ENCODE measurements at regions of chr22 and their contacts with region 1.

Region 1: DNA sequence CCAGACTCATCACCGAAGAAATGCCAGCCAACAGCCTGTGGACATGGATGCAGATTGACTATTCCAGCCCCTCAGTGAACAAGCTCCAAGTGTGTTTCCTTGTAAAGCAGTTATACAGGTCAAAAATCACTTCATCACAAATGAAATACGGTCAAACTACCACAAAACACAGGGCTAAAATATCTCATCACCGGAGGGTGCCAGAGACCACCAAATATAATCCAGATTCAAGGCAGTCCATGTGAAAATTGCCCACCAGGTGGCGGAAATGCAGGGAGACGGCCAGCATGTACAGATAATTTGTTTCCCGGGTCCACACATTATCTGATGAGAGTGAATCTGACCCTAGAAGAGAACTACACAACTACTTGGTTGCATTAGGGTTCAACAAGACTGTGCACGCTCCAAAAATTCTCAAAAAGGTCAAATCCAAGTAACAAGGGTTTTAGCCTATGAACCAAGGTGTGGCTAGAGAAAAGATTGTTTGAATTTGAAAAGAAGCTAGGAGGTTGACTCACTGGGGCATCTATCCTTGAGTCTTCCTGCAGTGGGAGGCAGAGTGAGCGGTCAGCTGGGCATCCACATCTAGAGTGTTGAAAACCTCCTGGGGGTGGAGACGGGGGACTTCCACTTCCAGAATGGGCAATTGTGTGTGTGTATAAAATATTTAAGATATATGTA is 71.7 kb downstream of the IGLL5 start:
- DNase-seq: peak; percentile 73
- H3K4me3 ChIP-seq: no peak overlapping the region; a peak in 1 of 4 replicates
- H3K27ac ChIP-seq: no peak overlapping the region
- H3K4me1 ChIP-seq: peaks cover 0 to 2% of the 10 kb centered on the region in 2 experiments; a peak in 1 of 4 replicates
- H3K27me3 ChIP-seq: no peaks in the 10 kb centered on the region
- CTCF ChIP-seq: peak; percentile 98
- EP300 ChIP-seq: no peak
- RAD21 ChIP-seq: peak; percentile 100

Region 2: DNA sequence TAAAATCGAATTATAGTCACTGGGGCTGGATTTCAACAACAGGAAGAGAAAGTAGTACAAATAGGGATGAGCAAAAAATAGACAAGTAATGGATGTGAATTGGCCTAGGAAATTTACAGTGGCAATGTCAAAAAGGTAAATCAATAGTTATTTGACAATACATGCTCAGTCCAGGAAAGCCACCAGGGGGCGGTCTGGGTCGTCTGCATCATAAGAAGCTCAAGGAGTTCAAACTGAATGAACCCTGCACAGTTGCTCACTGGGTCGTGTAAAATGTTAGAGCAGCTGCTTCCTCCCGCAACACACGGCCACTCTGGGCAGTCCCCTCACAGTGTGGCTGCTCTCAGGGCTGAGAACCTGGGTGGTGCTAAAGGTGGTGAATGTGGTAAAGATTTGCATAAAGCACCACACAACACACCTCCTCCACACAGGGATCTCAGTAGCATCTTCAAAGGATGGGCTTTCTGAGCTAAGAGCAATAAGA is 536.6 kb before region 1 on chr22:
- CTCF ChIA-PET with region 1: interaction called, 11 read pairs
- POLR2A ChIA-PET with region 1: no interaction called
- DNase-seq: peak; percentile 49
- H3K4me3 ChIP-seq: peak overlapping the region in 1 of 2 experiments; percentile 6; a peak in 1 of 4 replicates
- H3K27ac ChIP-seq: no peak overlapping the region
- H3K4me1 ChIP-seq: no peaks in the 10 kb centered on the region
- H3K27me3 ChIP-seq: peaks cover 7% of the 10 kb centered on the region; the same call in 1 of the 2 replicates
- CTCF ChIP-seq: peak; percentile 88
- EP300 ChIP-seq: no peak
- RAD21 ChIP-seq: peak; percentile 26; the same call in 1 of the 2 replicates

Region 3: GRCh38 chr22:22810018-22810427 is 149.3 kb before region 1 on chr22:
- CTCF ChIA-PET with region 1: interaction called, 11 read pairs
- POLR2A ChIA-PET with region 1: no interaction called
- DNase-seq: peak; percentile 51
- H3K4me3 ChIP-seq: no peak overlapping the region
- H3K27ac ChIP-seq: no peak overlapping the region
- H3K4me1 ChIP-seq: no peaks in the 10 kb centered on the region
- H3K27me3 ChIP-seq: no peaks in the 10 kb centered on the region
- CTCF ChIP-seq: peak; percentile 58
- EP300 ChIP-seq: no peak
- RAD21 ChIP-seq: peak; percentile 34

Region 4: DNA sequence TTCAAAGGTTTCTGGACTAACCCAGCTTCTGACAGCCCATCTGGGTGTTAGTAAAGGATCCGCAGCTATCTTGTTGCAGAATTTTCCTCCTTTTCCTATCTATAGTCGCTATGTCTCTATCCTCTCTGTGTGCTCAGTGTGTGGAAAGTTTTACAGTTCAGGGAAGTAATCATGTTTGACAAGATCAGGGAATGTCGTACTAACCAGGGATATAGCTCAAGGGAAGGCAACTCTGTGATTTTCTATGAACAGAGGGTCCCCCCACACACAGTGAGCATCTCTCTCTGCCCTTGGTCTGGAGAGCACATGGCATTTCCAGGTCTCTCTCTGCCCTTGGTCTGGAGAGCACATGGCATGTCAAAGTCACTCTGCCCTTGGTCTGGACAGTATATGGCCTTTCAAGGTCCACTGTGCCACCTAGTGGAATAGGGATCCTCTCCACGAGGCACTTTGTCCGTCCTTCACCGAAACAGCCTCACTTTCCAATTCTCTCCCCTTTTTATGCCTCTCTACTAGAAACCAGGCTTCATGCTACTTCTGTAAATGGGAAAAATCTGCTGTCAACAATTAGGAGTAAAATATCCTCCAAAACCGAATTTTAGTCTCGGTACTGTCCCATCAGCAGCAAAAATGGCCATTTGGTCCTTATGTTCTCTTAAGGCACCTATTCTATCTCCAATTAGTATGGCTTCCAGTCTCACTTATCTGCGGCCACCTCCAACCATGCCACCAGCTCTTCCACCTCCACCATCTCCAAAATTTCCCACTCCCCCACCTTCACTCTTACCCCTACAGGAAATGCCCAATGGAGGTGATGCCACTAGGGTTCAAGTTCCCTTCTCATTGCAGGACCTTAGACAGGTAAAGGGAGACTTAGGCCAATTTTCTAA is 17.0 kb after region 1 on chr22:
- CTCF ChIA-PET with region 1: interaction called, 214 read pairs
- POLR2A ChIA-PET with region 1: no interaction called
- DNase-seq: peak; percentile 36
- H3K4me3 ChIP-seq: no peak overlapping the region
- H3K27ac ChIP-seq: peak overlapping the region in 1 of 2 experiments; percentile 39; a peak in 2 of 4 replicates
- H3K4me1 ChIP-seq: peaks cover 0 to 16% of the 10 kb centered on the region in 2 experiments; a peak in 1 of 4 replicates
- H3K27me3 ChIP-seq: no peaks in the 10 kb centered on the region
- CTCF ChIP-seq: no peak
- EP300 ChIP-seq: peak in 1 of 2 experiments; percentile 86; a peak in 2 of 4 replicates
- RAD21 ChIP-seq: peak; percentile 63

Region 5: DNA sequence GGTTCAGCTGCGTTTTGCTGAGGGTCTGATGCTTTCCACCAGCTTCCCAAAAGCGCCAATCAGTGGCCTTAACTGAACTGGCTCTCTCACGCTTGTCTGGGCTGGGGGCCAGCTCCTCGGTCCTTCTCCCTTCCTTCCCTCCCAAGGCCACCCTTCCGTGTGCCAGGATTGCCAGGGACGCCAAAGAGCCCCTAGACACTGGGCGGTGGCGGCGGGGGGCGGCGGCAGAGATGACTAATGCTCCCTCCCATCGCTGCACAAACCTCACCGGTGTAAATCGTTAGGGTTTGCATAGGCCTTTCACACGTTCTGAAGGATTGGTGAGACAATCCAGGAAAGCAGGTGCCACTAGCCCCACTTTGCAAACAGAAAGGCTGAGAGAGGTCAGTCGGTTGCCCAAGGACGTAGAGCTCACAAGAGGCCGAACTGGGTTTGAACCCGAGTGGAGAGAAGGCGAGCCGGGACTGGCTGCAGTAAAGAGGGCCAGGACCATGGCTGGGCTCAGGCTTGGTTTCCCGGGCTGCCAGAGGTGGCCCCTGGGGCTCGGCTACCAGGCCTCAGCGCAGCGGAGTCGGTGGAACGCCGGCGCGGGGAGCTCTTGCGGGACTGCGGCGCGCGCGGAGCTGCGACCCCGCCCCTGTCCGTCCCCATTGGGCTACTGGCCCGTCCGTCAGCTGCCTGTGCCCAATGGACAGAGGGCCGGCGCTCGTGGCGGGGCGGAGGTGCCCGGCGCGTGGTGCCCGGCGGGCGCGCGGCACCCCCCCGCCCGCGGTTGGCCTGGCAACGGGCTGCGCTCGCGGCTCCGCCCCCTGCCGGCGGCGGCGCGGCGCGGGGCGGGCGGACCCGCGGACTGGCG is 110.4 kb after region 1 on chr22:
- CTCF ChIA-PET with region 1: interaction called, 16 read pairs
- POLR2A ChIA-PET with region 1: no interaction called
- DNase-seq: peak; percentile 99
- H3K4me3 ChIP-seq: peak overlapping the region; percentile 67 to 70
- H3K27ac ChIP-seq: peak overlapping the region in 1 of 2 experiments; percentile 73; a peak in 2 of 4 replicates
- H3K4me1 ChIP-seq: peaks cover 5 to 34% of the 10 kb centered on the region in 2 experiments; a peak in 1 of 4 replicates
- H3K27me3 ChIP-seq: no peaks in the 10 kb centered on the region
- CTCF ChIP-seq: no peak
- EP300 ChIP-seq: no peak
- RAD21 ChIP-seq: no peak

Region 6: GRCh38 chr22:23128269-23129108 is 169.2 kb after region 1 on chr22:
- CTCF ChIA-PET with region 1: interaction called, 397 read pairs
- POLR2A ChIA-PET with region 1: interaction called, 5 read pairs
- DNase-seq: peak; percentile 90
- H3K4me3 ChIP-seq: no peak overlapping the region; a peak in 1 of 4 replicates
- H3K27ac ChIP-seq: no peak overlapping the region; a peak in 1 of 4 replicates
- H3K4me1 ChIP-seq: peaks cover 0 to 22% of the 10 kb centered on the region in 2 experiments; a peak in 1 of 4 replicates
- H3K27me3 ChIP-seq: no peaks in the 10 kb centered on the region
- CTCF ChIP-seq: peak; percentile 86
- EP300 ChIP-seq: peak in 1 of 2 experiments; percentile 61; a peak in 1 of 4 replicates
- RAD21 ChIP-seq: peak; percentile 97

Region 7: DNA sequence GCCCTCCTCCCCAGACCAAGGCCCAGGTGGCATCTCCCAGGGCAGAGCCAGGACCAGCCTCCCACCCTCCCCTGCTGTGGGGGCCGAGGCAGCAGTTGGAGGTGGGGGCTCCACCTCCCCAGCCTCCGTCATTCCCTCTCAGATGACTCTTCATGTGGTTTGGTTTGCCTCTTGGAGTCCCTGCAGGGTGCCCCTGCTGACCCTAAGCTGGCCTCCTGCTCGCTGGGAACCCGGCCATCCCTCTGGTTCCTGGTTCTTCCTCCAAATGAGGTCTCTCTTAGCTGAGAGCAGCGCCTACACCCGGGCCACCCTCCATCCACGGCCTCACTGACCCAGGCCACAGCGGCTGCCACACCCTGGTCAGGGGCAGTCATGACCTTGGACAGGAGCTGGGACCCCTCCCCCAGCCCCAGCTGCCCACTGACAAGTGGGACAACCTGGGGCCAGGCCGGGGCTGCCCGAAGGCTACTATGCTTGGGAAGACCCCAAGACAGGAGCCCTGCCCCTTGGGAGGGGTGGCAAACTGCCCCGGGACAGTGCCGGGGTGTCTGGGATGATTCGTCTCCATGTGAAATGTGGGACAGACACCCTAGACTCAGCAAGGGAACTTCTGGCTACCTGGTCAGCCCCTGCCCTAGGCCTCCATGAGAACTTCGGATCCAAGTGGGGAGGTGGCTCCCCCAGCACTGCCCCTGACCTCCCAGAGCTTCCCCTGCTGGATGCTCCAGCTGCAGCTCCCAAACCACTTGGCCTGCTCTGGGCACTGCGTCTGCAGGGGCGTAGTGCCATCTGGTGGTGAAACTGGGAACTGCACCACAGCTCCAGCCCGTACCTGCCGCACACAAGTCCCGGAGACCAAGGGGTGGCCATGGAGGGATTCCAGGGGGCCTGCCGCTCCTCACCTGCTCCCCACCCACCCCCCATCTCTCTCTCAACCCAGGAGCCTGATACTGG is 426.3 kb after region 1 on chr22:
- CTCF ChIA-PET with region 1: interaction called, 16 read pairs
- POLR2A ChIA-PET with region 1: no interaction called
- DNase-seq: peak; percentile 93
- H3K4me3 ChIP-seq: no peak overlapping the region; a peak in 1 of 4 replicates
- H3K27ac ChIP-seq: no peak overlapping the region
- H3K4me1 ChIP-seq: peaks cover 0 to 10% of the 10 kb centered on the region in 2 experiments; a peak in 1 of 4 replicates
- H3K27me3 ChIP-seq: no peaks in the 10 kb centered on the region
- CTCF ChIP-seq: peak; percentile 89
- EP300 ChIP-seq: no peak
- RAD21 ChIP-seq: peak; percentile 95

Measured in SK-N-SH (cell line).